Natural killer cell (primary cell): ENCODE measurements at regions of chr14 and their contacts with region 1.

Region 1: DNA sequence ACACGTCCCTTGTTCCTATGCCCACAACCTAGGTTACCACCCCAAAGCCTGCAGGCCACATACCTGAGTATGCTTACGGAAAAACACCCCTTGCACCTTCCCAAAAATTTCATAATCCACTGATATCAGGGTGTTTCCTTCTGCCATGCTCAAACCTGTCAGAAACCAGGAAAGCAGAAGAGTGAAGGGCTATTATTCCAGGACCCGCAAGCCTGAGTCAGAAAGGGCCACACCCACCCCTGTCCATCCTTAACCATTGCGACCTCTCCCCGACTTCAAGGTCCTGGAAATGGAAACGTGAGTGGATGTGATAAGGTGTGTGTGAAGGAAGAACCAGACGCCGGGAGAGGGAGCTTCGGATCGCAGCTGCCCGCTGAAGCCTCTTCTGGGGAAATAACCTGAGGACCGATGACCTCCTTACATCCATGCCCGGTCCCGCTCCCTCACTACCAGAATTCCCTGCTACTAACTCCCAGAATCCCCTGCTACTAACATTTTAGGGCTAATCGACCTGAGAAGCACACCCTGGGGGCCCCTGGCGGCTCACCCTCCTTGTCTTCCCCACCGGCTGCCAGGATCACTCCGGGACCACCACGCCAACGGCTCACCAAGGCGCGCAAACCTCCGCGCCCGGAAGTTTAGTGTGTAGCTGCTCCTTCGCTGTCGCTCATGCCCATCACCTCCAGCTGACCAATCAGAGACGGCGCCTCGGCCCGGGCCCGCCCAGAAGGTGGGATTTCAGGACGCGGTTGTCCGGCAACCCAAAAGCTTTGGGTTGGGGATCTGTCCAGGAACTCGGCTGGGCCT is at the start of gene ACYP1:
- DNase-seq: peak; percentile 92 to 93
- ATAC-seq: peak; percentile 98 to 100 (median 99)
- H3K4me3 ChIP-seq: peak within 1 kb of the TSS; percentile 97
- H3K4me3 Mint-ChIP-seq: peak within 1 kb of the TSS; percentile 100
- H3K27ac ChIP-seq: peak within 1 kb of the TSS; percentile 82
- H3K27ac Mint-ChIP-seq: peak within 1 kb of the TSS; percentile 94 to 97
- H3K4me1 ChIP-seq: peaks cover 13% of the 10 kb centered on the region
- H3K4me1 Mint-ChIP-seq: peaks cover 18 to 22% of the 10 kb centered on the region in 2 donors
- H3K27me3 ChIP-seq: no peaks in the 10 kb centered on the region
- H3K27me3 Mint-ChIP-seq: no peaks in the 10 kb centered on the region
- CTCF ChIP-seq: no peak
- total RNA-seq, gene ACYP1: 13.3 to 17.4 (median 14.9) TPM

Region 2: GRCh38 chr14:74144789-74145188 is 918.8 kb before region 1 on chr14:
- intact Hi-C with region 1: no loop called
- DNase-seq: peak in 1 of 2 donors; percentile 5
- ATAC-seq: peak; percentile 83 to 97 (median 86)
- H3K4me3 ChIP-seq: no peak overlapping the region
- H3K4me3 Mint-ChIP-seq: peak overlapping the region; percentile 7
- H3K27ac ChIP-seq: no peak overlapping the region
- H3K27ac Mint-ChIP-seq: peak overlapping the region; percentile 27 to 75
- H3K4me1 ChIP-seq: no peaks in the 10 kb centered on the region
- H3K4me1 Mint-ChIP-seq: peaks cover 20 to 31% of the 10 kb centered on the region in 2 donors
- H3K27me3 ChIP-seq: no peaks in the 10 kb centered on the region
- H3K27me3 Mint-ChIP-seq: no peaks in the 10 kb centered on the region
- CTCF ChIP-seq: no peak

Region 3: DNA sequence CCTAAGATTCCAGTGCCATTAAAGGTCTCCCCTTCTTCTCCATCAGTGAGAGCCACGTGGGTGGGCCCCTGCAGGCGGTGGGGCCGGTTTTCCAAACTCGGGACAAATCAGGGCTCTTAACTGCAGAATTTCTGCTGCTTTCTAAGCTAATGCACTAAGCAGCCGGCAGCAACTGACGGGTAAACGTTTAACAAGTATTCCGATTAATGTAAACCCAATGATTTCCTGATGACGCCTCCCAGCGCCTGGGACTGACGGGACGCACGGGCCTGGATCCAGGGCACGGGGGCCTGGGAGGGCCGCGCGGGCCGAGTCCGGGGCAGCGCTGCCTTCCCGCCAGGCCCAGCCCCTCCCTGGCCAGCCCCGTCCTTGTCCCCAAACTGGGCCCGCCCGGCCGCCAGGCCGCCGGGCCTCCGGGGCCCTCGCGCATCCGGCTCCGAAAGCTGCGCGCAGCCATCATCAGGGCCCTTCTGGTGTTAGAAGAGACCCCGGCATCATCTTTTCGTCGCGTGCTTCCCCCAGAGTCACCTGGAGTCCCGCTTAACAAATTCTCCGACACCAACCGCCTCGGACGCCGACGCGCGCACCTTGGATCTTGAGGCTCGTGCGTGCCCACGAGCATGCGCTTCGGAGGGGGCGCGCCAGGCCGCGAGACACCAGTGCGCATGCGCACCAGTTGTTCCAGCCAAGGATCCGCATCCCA is 12.6 kb before region 1 on chr14 and contains the start of gene MLH3:
- intact Hi-C with region 1: loop called (anchors 1 kb)
- DNase-seq: peak; percentile 78 to 93
- ATAC-seq: peak; percentile 85 to 87 (median 87)
- H3K4me3 ChIP-seq: peak within 1 kb of the TSS; percentile 57
- H3K4me3 Mint-ChIP-seq: peak within 1 kb of the TSS; percentile 94
- H3K27ac ChIP-seq: peak within 1 kb of the TSS; percentile 62
- H3K27ac Mint-ChIP-seq: peak within 1 kb of the TSS; percentile 93 to 94
- H3K4me1 ChIP-seq: peaks cover 8% of the 10 kb centered on the region
- H3K4me1 Mint-ChIP-seq: peaks cover 20 to 38% of the 10 kb centered on the region in 2 donors
- H3K27me3 ChIP-seq: no peaks in the 10 kb centered on the region
- H3K27me3 Mint-ChIP-seq: no peaks in the 10 kb centered on the region
- CTCF ChIP-seq: no peak
- total RNA-seq, gene MLH3: 15.5 to 20.7 (median 19.1) TPM

Region 4: DNA sequence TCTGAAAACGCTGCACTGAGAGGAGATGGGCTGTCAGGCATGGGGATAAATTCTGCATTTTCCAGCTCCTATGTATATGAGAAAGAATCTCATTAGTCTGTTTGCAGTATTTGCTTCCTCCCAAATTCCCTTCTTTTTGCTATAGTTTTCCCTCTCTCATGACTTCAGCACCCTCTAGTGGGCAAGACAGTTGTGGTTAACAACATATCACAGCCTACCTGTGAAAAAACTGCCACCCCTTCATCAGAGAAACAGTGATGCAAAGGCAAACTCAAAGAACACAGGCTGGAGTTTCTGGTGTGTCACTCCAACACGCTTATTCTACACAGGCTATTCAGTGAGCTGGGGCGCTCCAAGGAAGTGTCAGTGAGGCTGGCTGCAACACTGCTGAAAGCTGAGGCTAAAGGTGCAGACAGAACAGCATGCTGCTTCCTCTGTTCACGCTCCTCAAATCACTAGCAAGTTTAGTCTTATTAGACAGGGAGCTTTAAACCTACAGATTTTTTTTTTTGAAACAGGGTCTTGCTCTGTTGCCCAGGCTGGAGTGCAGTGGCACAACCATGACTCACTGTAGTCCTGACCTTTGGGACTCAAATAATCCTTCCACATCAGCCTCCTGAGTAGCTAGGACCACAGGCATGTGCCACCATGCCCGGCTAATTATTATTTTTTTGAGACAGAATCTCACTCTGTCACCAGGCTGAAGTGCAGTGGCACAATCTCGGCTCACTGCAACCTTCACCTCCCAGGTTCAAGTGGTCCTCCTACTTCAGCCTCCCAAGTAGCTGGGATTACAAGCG is 25.2 kb after region 1 on chr14:
- intact Hi-C with region 1: no loop called
- DNase-seq: peak in 1 of 2 donors; percentile 75
- ATAC-seq: peak; percentile 55 to 77 (median 76)
- H3K4me3 ChIP-seq: no peak overlapping the region
- H3K4me3 Mint-ChIP-seq: no peak overlapping the region
- H3K27ac ChIP-seq: no peak overlapping the region
- H3K27ac Mint-ChIP-seq: no peak overlapping the region
- H3K4me1 ChIP-seq: no peaks in the 10 kb centered on the region
- H3K4me1 Mint-ChIP-seq: no peaks in the 10 kb centered on the region
- H3K27me3 ChIP-seq: no peaks in the 10 kb centered on the region
- H3K27me3 Mint-ChIP-seq: no peaks in the 10 kb centered on the region
- CTCF ChIP-seq: peak; percentile 70